ENCODE measurements at regions of chr19 and their contacts with region 1.

Region 1: GRCh38 chr19:53504885-53505284 is 33.1 kb upstream of the ZNF331 start:
- DNase-seq: no peak
- ATAC-seq: peak in 2 of 8 donors; percentile 24 to 45
- H3K4me3 ChIP-seq: peak overlapping the region in 8 of 10 donors; percentile 8 to 51 (median 40)
- H3K27ac ChIP-seq: peak overlapping the region in 2 of 10 donors; percentile 3 to 70
- H3K4me1 ChIP-seq: peaks cover 0 to 8% (median 7%) of the 10 kb centered on the region in 9 donors
- H3K27me3 ChIP-seq: peaks cover 0 to 27% (median 7%) of the 10 kb centered on the region in 7 donors
- CTCF ChIP-seq: no peak

Region 2: GRCh38 chr19:53424968-53425597 is 79.8 kb before region 1 on chr19:
- intact Hi-C with region 1: loop called in 6 of 10 experiments (anchors 5 to 10 kb)
- DNase-seq: peak; percentile 56 to 78
- ATAC-seq: peak; percentile 84 to 94 (median 90)
- H3K4me3 ChIP-seq: no peak overlapping the region
- H3K27ac ChIP-seq: no peak overlapping the region
- H3K4me1 ChIP-seq: no peaks in the 10 kb centered on the region
- H3K27me3 ChIP-seq: no peaks in the 10 kb centered on the region
- CTCF ChIP-seq: peak; percentile 75 to 88 (median 86)

Region 3: DNA sequence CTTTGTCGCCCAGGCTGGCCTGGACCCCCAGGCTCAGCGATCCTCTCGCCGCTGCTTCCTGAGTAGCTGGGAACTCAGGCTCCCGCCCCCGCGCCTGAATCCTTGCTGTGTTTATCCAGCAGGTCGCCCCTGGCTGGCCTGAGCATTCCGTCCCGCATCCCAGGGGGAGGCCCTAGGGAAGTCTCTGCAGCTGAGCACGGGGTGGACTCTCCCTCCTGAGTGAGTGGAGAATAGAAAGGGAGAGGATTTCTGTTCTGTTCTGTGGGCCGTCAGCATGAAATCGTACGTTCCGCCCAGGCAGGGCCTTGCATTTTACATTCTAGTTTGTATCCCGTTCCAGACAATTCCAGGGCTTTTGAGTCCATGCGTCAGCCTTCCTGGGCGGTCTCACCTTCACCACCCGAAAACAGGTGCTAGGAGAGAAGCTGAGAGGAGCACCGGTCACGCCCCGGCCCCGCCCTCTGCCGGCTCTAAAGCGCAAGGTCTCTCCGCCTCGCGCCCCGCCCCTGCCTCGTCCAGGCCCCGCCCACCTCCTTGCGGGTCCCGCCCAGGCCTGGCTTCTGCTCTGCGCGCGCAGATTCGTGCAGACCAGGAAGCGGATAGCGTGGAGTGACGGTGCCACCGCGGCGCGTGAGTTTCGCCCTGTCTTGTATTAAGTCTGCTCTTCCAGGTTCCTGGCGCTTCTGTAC is 73.3 kb before region 1 on chr19 and contains the start of gene ZNF761:
- intact Hi-C with region 1: loop called in 6 of 10 experiments (anchors 5 to 10 kb)
- DNase-seq: peak; percentile 92 to 97
- ATAC-seq: peak; percentile 100
- H3K4me3 ChIP-seq: peak within 1 kb of the TSS; percentile 58 to 97 (median 77)
- H3K27ac ChIP-seq: peak within 1 kb of the TSS in 9 of 10 donors; percentile 60 to 87 (median 74)
- H3K4me1 ChIP-seq: peaks cover 0 to 18% (median 7%) of the 10 kb centered on the region in 9 donors
- H3K27me3 ChIP-seq: no peaks in the 10 kb centered on the region
- CTCF ChIP-seq: peak in 8 of 9 donors; percentile 40 to 68 (median 60)
- total RNA-seq, gene ZNF761: 2.4 to 4.2 (median 3.4) TPM

Region 4: DNA sequence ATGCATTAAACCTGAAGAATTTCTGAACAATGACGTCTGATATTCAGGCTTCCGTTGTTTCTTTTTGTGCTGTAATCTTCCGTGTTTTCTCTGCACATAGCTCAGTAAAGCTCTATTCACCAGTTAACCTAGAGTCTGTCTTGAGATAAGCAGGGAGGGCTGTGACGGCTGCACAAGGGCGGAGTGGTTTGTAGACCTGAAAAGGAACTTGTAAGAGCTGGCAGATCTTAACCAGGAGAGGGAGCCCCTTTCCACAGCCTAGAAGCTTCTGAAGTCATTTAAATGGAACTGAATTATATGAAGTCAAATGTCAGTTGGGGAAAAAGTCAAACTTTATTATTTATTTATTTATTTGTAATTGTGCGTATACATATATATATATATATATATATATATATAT is 154.4 kb after region 1 on chr19:
- intact Hi-C with region 1: loop called in 1 of 10 experiments (anchors 10 kb)
- DNase-seq: peak in 1 of 2 donors; percentile 41
- ATAC-seq: peak in 6 of 8 donors; percentile 71 to 90 (median 78)
- H3K4me3 ChIP-seq: no peak overlapping the region
- H3K27ac ChIP-seq: peak overlapping the region in 7 of 10 donors; percentile 28 to 82 (median 48)
- H3K4me1 ChIP-seq: peaks cover 0 to 16% (median 0%) of the 10 kb centered on the region in 9 donors
- H3K27me3 ChIP-seq: peaks cover 0 to 12% (median 0%) of the 10 kb centered on the region in 7 donors
- CTCF ChIP-seq: peak in 8 of 9 donors; percentile 9 to 61 (median 47)